PC-9 (cell line): ENCODE measurements at regions of chr1 and their contacts with region 1.

Region 1: DNA sequence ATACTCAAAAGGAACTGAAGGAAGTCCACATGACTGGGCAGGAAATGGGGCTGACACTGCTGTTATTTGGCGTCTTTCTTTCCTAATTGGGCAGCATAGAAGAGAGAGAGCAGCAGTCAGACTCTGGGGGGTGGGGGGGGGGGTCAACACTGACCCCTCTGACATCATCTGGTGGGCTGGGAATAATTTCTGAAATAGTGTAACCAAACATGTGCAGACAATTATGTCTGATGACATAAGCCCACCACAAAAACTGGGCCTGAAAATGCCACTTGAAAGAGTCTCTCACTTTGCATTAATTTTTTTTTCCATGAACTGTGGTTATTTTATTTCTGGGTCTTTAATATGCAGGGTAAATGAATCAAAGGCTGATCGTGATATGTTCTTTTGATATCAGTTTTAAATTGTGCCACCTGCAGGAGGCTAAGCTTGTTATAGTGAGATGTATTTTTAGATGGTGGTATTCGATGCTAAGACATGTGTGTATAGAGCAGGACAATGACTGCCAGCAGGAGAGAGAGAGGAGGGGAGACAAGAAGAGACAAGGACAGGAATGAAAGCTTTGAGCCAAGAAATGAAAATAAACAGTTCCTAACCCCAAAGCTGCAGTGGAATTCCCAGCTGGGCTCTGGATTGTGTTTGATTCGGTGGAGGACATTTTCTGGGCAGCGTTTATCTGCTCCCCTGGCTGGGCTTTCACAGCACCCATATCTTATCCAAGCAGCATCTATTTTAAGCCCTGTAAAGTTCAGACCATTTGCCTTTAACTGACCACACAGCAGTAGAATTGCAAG is 264.7 kb downstream of the PBX1 start:
- DNase-seq: no peak
- H3K4me3 ChIP-seq: no peak overlapping the region
- H3K27ac ChIP-seq: no peak overlapping the region
- H3K4me1 ChIP-seq: no peaks in the 10 kb centered on the region
- H3K27me3 ChIP-seq: no peaks in the 10 kb centered on the region
- CTCF ChIP-seq: no peak

Region 2: GRCh38 chr1:164914208-164914607 is 90.5 kb after region 1 on chr1:
- CTCF ChIA-PET with region 1: no interaction called
- POLR2A ChIA-PET with region 1: no interaction called
- intact Hi-C with region 1: no loop called
- DNase-seq: peak in 1 of 2 experiments; percentile 57
- H3K4me3 ChIP-seq: no peak overlapping the region
- H3K27ac ChIP-seq: no peak overlapping the region
- H3K4me1 ChIP-seq: peaks cover 4% of the 10 kb centered on the region
- H3K27me3 ChIP-seq: no peaks in the 10 kb centered on the region
- CTCF ChIP-seq: peak; percentile 58

Region 3: GRCh38 chr1:164951508-164951907 is 127.8 kb after region 1 on chr1:
- CTCF ChIA-PET with region 1: interaction called, 11 read pairs
- POLR2A ChIA-PET with region 1: no interaction called
- intact Hi-C with region 1: no loop called
- DNase-seq: no peak
- H3K4me3 ChIP-seq: no peak overlapping the region
- H3K27ac ChIP-seq: no peak overlapping the region
- H3K4me1 ChIP-seq: no peaks in the 10 kb centered on the region
- H3K27me3 ChIP-seq: no peaks in the 10 kb centered on the region
- CTCF ChIP-seq: no peak